Activated T-helper 1 cell treated with anti-CD3 and anti-CD28 coated beads, Interleukin-12 subunit alpha, Interleukin-12 subunit beta, Interleukin-2, Interleukin-4 antibody, amounts not matched to agents 30 ng/mL and 10 ng/mL and 1 ng/mL, durations not matched to agents 14 hours and 24 hours and 36 hours (primary cell): ENCODE measurements at regions of chr19 and their contacts with region 1.

Region 1: DNA sequence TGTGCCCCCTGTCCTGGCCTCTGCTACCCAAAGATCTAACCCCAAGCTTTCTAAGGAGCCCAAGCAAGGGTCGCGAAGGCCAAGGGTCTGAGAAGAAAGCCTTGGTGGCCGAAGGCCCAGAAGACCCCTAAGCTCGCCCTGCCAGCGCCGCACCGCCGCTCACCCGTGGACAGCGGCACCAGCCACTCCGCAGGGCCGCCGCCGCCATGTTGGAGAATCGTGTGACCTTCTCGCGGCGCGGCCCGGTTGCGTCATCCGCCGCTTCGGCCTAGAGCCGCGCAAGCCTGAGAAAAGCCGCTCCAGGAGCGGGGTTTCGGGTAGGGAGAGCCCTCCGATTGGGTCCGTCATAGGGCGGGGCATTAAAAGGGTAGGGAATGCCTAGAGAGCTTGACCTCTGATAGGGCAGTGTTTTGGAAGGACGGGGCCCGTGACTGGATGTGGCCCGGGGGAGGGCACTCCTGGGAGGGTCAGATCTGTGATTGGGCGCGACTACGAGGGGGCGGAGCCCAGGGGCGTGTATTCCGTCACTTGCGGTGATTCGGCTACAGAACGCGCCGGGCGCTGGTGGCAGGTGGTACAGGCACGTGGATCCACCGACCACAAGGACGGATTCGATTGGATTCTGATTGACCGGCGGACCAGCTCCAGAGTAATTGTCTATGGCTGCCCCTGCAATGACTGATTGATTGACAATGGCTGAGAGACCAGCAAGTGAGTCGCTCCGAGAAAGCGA is at the start of gene TIMM44:
- DNase-seq: peak; percentile 99
- H3K4me3 Mint-ChIP-seq: peak within 1 kb of the TSS; percentile 87
- H3K27ac Mint-ChIP-seq: peak within 1 kb of the TSS; percentile 98
- H3K4me1 Mint-ChIP-seq: peaks cover 27% of the 10 kb centered on the region
- H3K27me3 Mint-ChIP-seq: no peaks in the 10 kb centered on the region
- total RNA-seq, gene TIMM44: 114 and 120 TPM in 2 replicates

Region 2: DNA sequence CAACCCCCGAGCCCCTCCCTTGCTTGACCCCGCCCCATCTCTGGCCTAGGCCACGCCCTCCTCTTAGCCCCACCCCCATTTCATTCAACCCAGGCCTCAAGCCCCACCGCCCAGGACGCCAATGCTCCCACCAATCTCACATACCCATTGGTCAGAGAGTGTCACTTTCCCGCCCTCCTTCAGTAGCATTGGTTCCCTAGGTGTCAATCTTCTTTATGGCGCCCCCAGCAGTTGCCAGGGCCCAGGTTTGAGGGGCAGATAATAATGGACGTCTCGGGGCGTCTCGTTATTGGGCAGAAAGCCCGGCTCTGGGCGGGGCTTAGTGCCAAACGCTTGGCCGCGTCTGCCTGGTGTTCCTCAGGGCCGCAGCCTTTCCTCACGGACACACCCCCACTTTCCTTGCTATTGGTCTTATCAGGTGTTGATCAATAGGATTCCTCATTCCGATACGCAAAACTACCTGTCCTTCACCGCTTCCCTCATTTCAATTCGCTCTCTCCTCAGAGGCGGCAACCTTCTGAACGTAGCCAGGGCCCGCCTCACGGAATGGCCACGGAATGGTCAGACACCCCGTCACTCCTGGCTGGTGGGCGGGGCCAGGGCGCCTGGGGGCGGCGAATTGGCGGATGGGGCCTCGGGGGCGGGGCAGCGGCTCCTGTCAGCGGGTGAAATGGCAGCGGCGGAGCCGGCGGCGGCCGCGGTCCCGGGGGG is 113.9 kb before region 1 on chr19 and contains the start of gene EVI5L:
- intact Hi-C with region 1: loop called (anchors 1 kb)
- DNase-seq: peak; percentile 99
- H3K4me3 Mint-ChIP-seq: peak within 1 kb of the TSS; percentile 86
- H3K27ac Mint-ChIP-seq: peak within 1 kb of the TSS; percentile 69
- H3K4me1 Mint-ChIP-seq: peaks cover 21% of the 10 kb centered on the region
- H3K27me3 Mint-ChIP-seq: peaks cover 15% of the 10 kb centered on the region
- total RNA-seq, gene EVI5L: 4.4 TPM in 2 replicates

Region 3: DNA sequence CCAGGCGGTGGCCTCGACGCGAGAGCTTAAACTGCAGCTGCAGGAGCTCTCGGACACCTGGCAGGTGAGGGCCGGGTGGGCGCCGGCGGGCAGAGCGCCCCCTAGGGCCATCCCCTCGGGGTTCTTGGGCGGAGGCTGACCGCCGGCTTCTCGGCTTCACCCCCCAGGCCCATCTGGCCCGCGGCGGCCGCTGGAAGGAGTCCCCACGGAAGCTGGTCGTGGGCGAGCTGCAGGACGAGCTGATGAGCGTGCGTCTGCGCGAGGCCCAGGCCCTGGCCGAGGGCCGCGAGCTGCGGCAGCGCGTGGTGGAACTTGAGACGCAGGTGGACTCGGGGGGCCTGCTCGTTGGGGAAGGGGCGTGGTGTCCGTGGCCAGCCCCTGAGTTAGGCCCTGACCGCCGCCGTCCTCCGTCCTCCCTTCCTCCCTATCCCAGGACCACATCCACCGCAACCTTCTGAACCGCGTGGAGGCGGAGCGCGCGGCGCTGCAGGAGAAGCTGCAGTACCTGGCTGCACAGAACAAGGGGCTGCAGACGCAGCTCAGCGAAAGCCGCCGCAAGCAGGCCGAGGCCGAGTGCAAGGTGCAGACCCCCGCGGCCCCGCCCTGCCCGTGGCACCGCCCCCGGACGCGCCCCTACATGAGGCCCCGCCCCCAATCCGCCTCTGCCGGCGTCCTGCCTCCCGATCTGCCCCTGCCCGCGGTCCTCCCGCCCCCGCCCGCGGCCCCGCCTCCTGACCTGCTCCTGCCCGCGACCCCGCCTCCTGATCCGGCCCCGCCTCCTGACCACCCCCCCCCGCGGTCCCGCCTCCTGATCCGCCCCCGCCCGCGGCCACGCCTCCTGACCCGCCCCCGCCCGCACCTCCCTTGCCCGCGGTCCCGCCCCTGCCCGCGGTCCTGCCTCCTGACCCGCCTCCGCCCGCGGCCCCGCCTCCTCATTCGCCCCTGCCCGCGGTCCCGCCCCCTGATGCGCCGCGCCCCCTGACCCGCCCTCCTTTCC is 81.4 kb before region 1 on chr19:
- intact Hi-C with region 1: no loop called
- DNase-seq: peak; percentile 58
- H3K4me3 Mint-ChIP-seq: peak overlapping the region; percentile 33
- H3K27ac Mint-ChIP-seq: no peak overlapping the region
- H3K4me1 Mint-ChIP-seq: peaks cover 7% of the 10 kb centered on the region
- H3K27me3 Mint-ChIP-seq: peaks cover 23% of the 10 kb centered on the region

Region 4: DNA sequence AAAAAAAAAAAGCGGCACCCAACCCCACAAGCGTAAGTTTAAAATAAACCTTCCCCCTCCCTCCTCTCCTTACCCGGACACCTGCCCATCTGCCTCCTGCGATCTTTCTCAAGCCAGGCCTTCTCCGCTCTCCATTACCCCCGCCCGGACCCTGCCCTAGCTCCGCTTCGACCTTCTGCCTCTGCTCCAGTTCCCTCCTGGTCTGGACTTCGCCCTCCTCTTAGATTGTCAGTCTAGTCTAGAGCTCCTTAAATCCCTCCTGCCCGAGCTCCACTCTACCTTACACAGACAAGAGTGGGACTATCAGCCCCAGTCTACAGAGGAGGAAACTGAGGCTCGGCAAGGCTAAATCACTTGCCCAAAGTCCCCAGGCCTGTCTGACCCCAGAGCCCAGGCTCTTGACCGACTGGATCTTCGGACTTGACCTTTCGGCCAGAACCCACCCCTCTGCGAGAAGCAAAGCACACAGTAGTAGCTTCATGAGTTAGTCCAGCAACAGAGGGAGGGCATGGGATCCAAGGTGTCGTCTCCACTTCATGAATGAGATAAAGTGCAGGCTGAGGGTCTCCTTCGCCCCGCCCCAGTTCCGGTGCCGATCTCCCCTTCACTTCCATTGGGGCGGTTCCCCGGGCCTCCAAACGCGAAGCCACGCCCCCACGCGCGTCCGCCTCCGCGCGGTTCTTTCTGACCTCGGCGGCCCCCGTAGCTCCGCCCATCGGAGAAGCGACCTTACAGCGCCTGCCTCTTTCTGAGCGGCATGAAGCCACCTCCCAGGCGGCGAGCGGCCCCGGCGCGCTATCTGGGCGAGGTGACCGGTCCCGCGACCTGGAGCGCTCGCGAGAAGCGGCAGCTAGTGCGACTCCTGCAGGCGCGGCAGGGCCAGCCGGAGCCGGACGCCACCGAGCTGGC is 23.7 kb before region 1 on chr19 and contains the start of gene SNAPC2:
- intact Hi-C with region 1: loop called (anchors 1 kb)
- DNase-seq: peak; percentile 96
- H3K4me3 Mint-ChIP-seq: peak within 1 kb of the TSS; percentile 86
- H3K27ac Mint-ChIP-seq: peak within 1 kb of the TSS; percentile 93
- H3K4me1 Mint-ChIP-seq: peaks cover 22% of the 10 kb centered on the region
- H3K27me3 Mint-ChIP-seq: peaks cover 18% of the 10 kb centered on the region
- total RNA-seq, gene SNAPC2: 21.3 and 22.4 TPM in 2 replicates

Region 5: DNA sequence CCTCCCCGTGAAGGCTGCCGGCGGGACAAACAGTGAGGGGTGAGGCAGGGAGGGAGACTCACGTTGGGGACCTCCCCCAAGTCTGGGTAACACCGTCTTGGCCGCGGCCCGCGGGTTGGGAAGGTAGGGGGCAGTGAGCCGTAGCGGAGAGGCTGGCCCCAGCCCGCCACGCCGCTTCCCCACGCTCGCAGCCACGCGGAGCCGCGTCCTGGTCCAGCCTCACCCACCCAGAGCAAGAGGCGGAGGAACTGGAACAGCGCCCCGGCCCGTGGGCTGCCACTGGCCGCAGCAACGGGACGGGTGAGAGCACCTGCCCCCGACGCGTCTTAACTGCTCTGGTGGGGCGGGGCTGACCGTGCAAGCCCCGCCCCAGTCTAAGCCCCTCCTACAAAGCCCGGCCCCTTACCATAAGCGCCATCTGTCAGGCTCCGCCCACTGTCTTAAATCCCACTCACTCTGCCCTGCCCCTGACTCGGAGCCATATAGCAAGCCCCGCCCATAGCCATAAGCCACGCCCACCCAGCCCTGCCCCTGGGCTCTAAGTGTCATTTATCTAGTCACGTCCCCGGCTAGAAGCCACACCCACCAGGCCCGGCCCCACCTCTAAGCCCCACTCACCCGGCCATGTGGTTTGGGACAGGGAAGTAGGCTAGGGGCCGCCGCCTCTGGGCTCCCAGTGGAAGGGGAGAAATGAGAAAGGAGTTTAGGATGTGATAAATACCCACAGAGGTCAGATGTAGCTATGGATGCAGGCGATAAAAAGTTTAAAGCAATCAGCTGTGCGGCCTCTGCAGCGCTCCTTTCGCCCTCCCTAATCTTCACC is 106.9 kb after region 1 on chr19:
- intact Hi-C with region 1: loop called (anchors 5 kb)
- DNase-seq: peak; percentile 73
- H3K4me3 Mint-ChIP-seq: peak overlapping the region; percentile 49
- H3K27ac Mint-ChIP-seq: peak overlapping the region; percentile 52
- H3K4me1 Mint-ChIP-seq: peaks cover 27% of the 10 kb centered on the region
- H3K27me3 Mint-ChIP-seq: peaks cover 13% of the 10 kb centered on the region

Region 6: DNA sequence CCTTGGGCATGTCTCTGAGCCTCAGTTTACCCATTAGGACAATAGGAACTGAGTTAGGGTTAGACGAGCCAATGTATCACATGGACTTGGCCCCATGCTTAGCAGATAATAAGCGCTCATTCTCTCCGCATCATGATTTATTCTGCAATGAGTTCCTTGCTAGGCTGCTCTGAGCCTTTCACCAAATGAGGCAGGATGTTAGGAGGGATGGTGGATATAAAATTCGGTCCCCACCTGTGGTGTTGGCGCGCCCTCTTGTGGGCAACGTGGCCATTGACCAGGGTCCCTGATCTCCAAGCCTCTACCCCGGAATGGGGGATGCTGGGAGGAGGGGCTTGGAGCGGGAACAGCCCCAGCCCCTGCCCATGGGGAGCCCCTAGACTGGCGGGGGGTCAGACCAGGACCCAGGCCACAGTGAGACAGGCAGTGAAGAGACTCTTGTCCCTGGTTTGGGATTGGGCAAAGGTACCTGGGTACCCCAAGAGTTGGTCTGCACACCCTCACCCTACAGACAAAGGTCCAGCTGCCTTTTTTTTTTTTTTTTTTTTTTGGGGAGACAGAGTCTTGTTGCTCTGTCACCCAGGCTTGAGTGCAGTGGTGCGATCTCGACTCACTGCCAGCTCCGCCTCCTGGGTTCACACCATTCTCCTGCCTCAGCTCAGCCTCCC is 309.4 kb after region 1 on chr19:
- intact Hi-C with region 1: loop called (anchors 1 kb)
- DNase-seq: peak; percentile 71
- H3K4me3 Mint-ChIP-seq: no peak overlapping the region
- H3K27ac Mint-ChIP-seq: no peak overlapping the region
- H3K4me1 Mint-ChIP-seq: no peaks in the 10 kb centered on the region
- H3K27me3 Mint-ChIP-seq: no peaks in the 10 kb centered on the region

Region 7: DNA sequence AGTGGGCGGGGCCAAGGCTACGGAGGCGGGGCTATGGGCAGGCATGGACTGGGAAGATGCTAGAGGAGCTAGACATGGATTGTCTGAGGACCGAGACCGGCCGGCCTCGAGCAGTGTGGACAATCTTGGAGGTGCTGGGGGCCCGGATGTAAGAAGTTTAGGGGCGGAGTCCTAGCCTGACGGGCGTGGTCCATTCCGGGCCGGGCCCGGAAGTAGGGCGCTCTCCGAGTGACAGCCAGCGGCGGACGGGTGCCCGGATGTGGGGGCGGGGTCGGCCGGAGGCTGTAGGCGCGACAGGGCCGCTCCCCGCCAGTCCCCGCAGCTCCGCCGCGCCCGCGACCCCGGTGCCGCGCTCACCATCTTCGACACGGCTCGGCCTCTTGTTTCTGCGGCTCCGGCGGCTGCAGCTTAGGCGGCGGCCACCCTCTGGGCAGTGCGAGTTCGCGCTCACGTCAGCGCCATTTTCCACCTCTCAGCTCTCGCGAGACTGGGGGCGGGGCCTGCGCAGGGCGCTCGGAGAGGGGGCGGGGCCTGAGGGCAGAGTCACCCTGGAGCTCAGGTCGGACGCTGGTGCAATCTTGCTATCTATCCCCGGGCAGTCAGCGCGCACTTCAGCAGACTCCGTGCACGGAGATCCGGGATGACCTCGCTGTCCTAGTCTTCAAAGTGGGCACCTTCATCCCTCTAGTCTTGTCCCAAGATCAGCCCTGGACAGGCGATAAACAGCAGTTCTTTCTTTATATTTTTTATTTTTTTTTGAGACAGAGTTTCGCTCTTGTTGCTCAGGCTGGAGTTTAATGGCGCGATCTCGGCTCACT is 570.3 kb after region 1 on chr19 and contains the start of gene ZNF414:
- intact Hi-C with region 1: loop called (anchors 10 kb)
- DNase-seq: peak; percentile 92
- H3K4me3 Mint-ChIP-seq: peak within 1 kb of the TSS; percentile 93
- H3K27ac Mint-ChIP-seq: peak within 1 kb of the TSS; percentile 98
- H3K4me1 Mint-ChIP-seq: peaks cover 52% of the 10 kb centered on the region
- H3K27me3 Mint-ChIP-seq: no peaks in the 10 kb centered on the region
- total RNA-seq, gene ZNF414: 22.1 and 23.6 TPM in 2 replicates